B cell (primary cell): ENCODE measurements at regions of chr14 and their contacts with region 1.

Region 1: DNA sequence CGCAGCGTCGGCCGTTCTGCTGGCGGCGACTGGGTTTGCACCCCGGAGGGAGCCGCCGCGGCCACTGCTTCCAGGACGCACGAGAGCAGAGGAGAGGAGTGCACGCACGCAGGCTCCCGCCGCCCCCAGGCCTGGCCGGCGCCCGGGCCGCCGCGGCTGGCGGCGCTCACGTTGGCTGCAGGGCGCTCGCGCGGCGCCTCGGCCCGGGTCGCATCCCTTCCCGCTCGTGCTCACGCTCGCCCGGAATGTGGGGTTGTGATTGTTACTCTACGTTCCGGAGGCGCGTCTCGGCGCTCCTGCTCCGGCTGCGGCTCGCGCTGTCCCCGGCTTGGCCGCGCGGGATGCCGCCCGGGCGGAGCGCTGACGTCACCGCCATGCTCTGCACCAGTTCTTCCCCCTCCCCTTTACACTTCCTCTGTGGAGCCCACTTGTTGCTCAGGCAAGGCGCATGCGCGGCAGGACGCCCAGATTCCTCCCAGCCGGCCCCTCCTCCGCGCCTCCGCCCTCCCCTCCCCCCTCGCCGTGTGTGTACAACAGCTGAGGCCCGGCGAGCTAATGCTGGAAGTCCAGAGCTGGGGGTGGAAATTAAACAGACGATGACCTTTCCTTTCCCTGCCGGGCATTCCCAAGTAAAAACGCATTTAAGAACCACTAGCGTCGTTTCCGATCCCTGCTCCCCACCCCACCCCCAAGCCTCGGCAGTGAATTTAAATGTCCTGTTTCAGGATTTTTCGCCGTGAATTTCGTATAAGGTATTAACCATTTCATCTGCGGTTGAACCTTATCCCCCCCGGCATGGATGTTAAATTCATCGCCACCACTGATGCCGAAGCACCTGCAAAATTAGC is at the start of gene IRF2BPL:
- DNase-seq: peak; percentile 97
- ATAC-seq: peak; percentile 70
- H3K4me3 ChIP-seq: peak within 1 kb of the TSS; percentile 11 to 95 (median 82)
- H3K4me3 Mint-ChIP-seq: peak within 1 kb of the TSS; percentile 92
- H3K27ac ChIP-seq: peak within 1 kb of the TSS; percentile 96 to 98
- H3K27ac Mint-ChIP-seq: peak within 1 kb of the TSS; percentile 99
- H3K4me1 ChIP-seq: peaks cover 39 to 47% of the 10 kb centered on the region in 2 donors
- H3K4me1 Mint-ChIP-seq: peaks cover 46% of the 10 kb centered on the region
- H3K27me3 ChIP-seq: no peaks in the 10 kb centered on the region
- H3K27me3 Mint-ChIP-seq: no peaks in the 10 kb centered on the region
- CTCF ChIP-seq: no peak
- total RNA-seq, gene IRF2BPL: 32.8 and 34.0 TPM in 2 replicates

Region 2: GRCh38 chr14:76168531-76168930 is 860.1 kb before region 1 on chr14:
- CTCF ChIA-PET with region 1: no interaction called
- POLR2A ChIA-PET with region 1: no interaction called
- intact Hi-C with region 1: no loop called
- DNase-seq: no peak
- ATAC-seq: no peak
- H3K4me3 ChIP-seq: no peak overlapping the region
- H3K4me3 Mint-ChIP-seq: no peak overlapping the region
- H3K27ac ChIP-seq: no peak overlapping the region
- H3K27ac Mint-ChIP-seq: no peak overlapping the region
- H3K4me1 ChIP-seq: no peaks in the 10 kb centered on the region
- H3K4me1 Mint-ChIP-seq: peaks cover 9% of the 10 kb centered on the region
- H3K27me3 ChIP-seq: no peaks in the 10 kb centered on the region
- H3K27me3 Mint-ChIP-seq: no peaks in the 10 kb centered on the region
- CTCF ChIP-seq: no peak

Region 3: DNA sequence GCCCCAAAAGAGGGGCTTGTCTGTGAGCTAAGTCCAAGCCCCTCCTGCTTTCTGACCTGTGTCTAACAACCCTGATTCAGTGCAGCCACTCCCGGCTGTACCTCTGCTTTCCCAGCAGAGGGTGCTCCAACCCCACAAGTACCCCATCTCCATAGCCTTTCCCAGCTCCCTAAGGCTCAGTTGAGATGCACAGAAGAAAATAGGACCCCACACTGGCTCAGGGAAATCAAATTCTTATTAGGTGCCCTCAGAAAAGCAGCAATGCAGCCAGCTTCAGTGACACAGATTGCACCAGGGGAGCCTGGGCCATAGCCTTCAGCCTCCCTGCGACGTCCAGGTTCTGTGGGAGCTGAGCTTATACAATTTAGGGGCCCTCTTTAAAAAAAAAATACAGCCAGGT is 152.5 kb before region 1 on chr14:
- CTCF ChIA-PET with region 1: interaction called, 40 read pairs
- POLR2A ChIA-PET with region 1: interaction called, 3 read pairs
- intact Hi-C with region 1: no loop called
- DNase-seq: peak; percentile 68
- ATAC-seq: peak; percentile 55
- H3K4me3 ChIP-seq: no peak overlapping the region
- H3K4me3 Mint-ChIP-seq: no peak overlapping the region
- H3K27ac ChIP-seq: no peak overlapping the region
- H3K27ac Mint-ChIP-seq: no peak overlapping the region
- H3K4me1 ChIP-seq: no peaks in the 10 kb centered on the region
- H3K4me1 Mint-ChIP-seq: no peaks in the 10 kb centered on the region
- H3K27me3 ChIP-seq: peaks cover 0 to 3% (median 0%) of the 10 kb centered on the region in 4 experiments
- H3K27me3 Mint-ChIP-seq: peaks cover 4% of the 10 kb centered on the region
- CTCF ChIP-seq: peak; percentile 74

Region 4: DNA sequence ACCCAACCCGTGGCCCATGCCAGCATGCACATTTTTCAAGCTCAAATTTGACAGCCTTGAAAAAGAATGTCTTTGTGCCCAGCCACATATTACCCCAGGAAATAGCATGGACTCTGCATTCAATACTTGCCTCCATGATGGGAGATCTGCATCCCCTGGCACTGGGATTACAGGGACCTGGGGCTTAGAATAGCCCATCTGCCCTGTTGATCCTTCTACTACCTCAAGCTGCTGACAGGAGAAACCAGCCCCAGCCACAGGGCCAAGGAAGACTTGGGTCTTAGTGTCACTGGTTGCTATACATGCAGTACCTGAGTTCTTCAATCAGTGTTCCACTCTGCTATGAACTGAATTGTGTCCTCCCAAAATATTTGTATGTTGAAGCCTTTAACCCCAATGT is 117.1 kb before region 1 on chr14:
- CTCF ChIA-PET with region 1: interaction called, 19 read pairs
- POLR2A ChIA-PET with region 1: interaction called, 6 read pairs
- intact Hi-C with region 1: loop called (anchors 1 kb)
- DNase-seq: no peak
- ATAC-seq: no peak
- H3K4me3 ChIP-seq: no peak overlapping the region
- H3K4me3 Mint-ChIP-seq: no peak overlapping the region
- H3K27ac ChIP-seq: no peak overlapping the region
- H3K27ac Mint-ChIP-seq: peak overlapping the region; percentile 72
- H3K4me1 ChIP-seq: peaks cover 14 to 25% of the 10 kb centered on the region in 2 donors
- H3K4me1 Mint-ChIP-seq: peaks cover 19% of the 10 kb centered on the region
- H3K27me3 ChIP-seq: no peaks in the 10 kb centered on the region
- H3K27me3 Mint-ChIP-seq: no peaks in the 10 kb centered on the region
- CTCF ChIP-seq: no peak

Region 5: GRCh38 chr14:76956316-76957090 is 72.1 kb before region 1 on chr14:
- CTCF ChIA-PET with region 1: interaction called, 33 read pairs
- POLR2A ChIA-PET with region 1: interaction called, 54 read pairs
- intact Hi-C with region 1: loop called (anchors 1 kb)
- DNase-seq: peak; percentile 87
- ATAC-seq: peak; percentile 70
- H3K4me3 ChIP-seq: peak overlapping the region; percentile 23 to 64 (median 59)
- H3K4me3 Mint-ChIP-seq: peak overlapping the region; percentile 95
- H3K27ac ChIP-seq: peak overlapping the region; percentile 89 to 94
- H3K27ac Mint-ChIP-seq: peak overlapping the region; percentile 99
- H3K4me1 ChIP-seq: peaks cover 50 to 75% of the 10 kb centered on the region in 2 donors
- H3K4me1 Mint-ChIP-seq: peaks cover 65% of the 10 kb centered on the region
- H3K27me3 ChIP-seq: no peaks in the 10 kb centered on the region
- H3K27me3 Mint-ChIP-seq: no peaks in the 10 kb centered on the region
- CTCF ChIP-seq: no peak

Region 6: DNA sequence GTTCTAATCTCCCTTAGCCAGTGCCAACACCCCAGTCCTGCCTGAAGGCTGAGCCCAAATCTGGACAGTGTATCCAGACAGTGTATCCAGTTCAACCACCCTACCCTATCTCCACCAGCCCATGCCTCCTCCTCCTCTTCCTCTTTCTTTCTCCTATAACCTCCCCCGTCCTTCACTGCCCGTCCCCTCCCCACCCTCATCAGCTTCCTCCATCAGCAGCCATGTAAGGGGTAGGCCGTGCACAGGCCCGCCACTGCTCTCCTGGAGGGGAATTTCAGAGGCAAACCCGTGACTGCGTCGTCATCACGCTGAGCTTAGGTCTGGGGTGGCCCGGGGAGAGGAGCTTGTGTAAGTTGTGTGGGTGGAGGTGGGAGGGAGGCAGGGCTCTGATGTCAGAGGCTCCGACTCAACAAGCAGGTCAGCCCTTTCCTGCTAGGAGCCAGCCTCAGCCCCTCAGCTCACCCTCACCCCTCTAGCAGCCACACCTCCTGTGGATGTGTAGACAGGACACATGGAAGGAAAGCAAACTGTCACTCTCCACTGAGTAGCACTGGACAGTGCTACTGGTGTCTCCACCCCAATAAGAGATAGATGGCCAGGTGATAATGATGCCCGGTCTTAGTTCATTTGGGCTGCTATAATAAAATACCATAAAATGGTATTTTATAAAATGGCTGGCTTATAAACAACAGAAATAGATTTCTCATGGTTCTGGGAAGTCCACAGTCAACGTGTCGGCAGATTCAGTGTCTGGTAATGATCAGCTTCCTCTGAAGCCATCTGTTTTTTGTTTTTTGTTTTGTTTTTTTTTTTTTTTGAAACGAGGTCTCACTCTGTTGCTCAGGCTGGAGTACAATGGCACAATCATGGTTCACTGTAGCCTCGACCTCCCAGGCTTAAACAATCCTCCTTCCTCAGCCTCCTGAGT is 50.6 kb before region 1 on chr14:
- CTCF ChIA-PET with region 1: interaction called, 4 read pairs
- POLR2A ChIA-PET with region 1: interaction called, 18 read pairs
- intact Hi-C with region 1: no loop called
- DNase-seq: peak; percentile 96
- ATAC-seq: peak; percentile 94
- H3K4me3 ChIP-seq: no peak overlapping the region
- H3K4me3 Mint-ChIP-seq: peak overlapping the region; percentile 79
- H3K27ac ChIP-seq: peak overlapping the region; percentile 75 to 82
- H3K27ac Mint-ChIP-seq: peak overlapping the region; percentile 93
- H3K4me1 ChIP-seq: peaks cover 18 to 25% of the 10 kb centered on the region in 2 donors
- H3K4me1 Mint-ChIP-seq: peaks cover 25% of the 10 kb centered on the region
- H3K27me3 ChIP-seq: no peaks in the 10 kb centered on the region
- H3K27me3 Mint-ChIP-seq: no peaks in the 10 kb centered on the region
- CTCF ChIP-seq: no peak

Region 7: DNA sequence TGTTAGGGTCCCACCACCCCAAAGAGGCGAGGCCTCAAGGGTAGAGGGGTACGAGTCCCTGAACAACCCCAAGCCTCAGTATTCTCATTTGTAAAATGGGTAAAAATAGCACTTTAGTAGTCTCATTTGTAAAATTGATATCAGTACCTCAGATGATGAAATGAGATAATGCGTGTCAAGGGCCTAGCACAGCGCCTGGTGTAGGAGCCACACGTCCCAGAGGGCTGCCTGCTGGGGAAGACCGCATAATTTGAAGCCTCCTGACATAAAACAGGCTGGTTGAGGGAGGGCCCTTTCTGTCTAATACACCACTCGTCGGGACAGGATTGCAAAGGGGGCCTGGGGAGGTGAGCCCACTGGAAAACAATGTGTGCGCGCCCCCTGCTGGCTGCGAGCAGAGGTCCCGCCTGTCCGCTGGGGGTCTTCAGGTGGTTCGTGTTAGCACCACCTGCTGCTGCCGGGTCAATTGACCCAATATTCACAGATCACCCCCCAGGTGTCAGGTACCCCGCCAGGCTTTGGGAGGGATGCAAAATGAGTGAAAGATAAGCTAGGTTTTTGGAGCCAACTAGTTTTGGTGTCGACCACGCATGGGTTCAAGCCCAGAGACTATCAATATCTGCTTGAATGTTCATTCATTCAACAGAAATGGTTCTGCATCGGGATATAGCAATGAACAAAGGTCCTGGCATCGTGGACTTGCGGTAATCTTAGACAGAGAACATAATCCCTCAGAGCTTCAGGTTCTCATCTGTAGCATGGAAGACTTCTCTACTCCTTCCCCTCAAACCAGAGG is 24.6 kb after region 1 on chr14:
- CTCF ChIA-PET with region 1: interaction called, 48 read pairs
- POLR2A ChIA-PET with region 1: interaction called, 7 read pairs
- intact Hi-C with region 1: loop called (anchors 1 kb)
- DNase-seq: peak; percentile 89
- ATAC-seq: peak; percentile 94
- H3K4me3 ChIP-seq: no peak overlapping the region
- H3K4me3 Mint-ChIP-seq: no peak overlapping the region
- H3K27ac ChIP-seq: no peak overlapping the region
- H3K27ac Mint-ChIP-seq: no peak overlapping the region
- H3K4me1 ChIP-seq: peaks cover 11 to 15% of the 10 kb centered on the region in 2 donors
- H3K4me1 Mint-ChIP-seq: peaks cover 7% of the 10 kb centered on the region
- H3K27me3 ChIP-seq: no peaks in the 10 kb centered on the region
- H3K27me3 Mint-ChIP-seq: no peaks in the 10 kb centered on the region
- CTCF ChIP-seq: peak; percentile 95

Region 8: DNA sequence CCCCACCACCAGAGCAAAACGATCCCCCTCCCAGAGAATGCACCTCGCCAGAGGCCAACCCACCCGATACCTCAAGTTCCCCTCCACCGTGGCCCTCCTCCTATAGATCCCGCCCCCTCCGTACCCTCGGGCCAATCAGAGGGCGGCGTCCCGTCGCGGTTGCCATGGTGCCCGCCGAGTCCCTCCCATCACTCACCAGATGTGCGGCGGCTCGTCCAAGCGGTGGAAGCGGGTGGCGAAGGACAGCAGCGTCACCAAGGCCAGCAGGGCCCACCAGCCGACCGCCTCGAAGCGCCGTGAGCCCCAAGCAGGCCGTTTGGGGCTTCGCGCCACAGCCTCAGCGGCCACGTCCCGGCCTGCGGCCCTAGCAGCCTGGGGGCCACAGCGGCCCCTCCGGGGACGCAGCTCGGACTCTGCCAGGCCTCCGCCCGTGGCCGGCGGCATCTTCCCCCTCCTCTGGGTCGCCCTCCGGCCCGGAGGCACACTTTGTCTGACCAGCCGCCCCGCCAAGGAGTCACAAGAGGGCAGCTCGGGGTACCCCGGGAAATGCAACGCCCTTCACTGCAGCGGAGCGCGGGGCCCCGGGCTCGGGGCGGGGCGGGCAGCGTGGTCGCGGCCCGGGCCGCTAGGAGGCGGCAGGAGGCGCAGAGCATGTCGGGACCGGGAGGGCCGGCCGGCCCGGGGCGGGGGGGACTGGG is 291.8 kb after region 1 on chr14 and contains the start of gene POMT2:
- CTCF ChIA-PET with region 1: no interaction called
- POLR2A ChIA-PET with region 1: interaction called, 3 read pairs
- intact Hi-C with region 1: loop called (anchors 2 kb)
- DNase-seq: peak; percentile 96
- ATAC-seq: peak; percentile 56
- H3K4me3 ChIP-seq: peak within 1 kb of the TSS; percentile 59 to 99 (median 93)
- H3K4me3 Mint-ChIP-seq: peak within 1 kb of the TSS; percentile 100
- H3K27ac ChIP-seq: peak within 1 kb of the TSS; percentile 89 to 92
- H3K27ac Mint-ChIP-seq: peak within 1 kb of the TSS; percentile 100
- H3K4me1 ChIP-seq: peaks cover 10 to 16% of the 10 kb centered on the region in 2 donors
- H3K4me1 Mint-ChIP-seq: peaks cover 18% of the 10 kb centered on the region
- H3K27me3 ChIP-seq: no peaks in the 10 kb centered on the region
- H3K27me3 Mint-ChIP-seq: no peaks in the 10 kb centered on the region
- CTCF ChIP-seq: peak; percentile 43
- total RNA-seq, gene POMT2: 36.6 and 44.1 TPM in 2 replicates